ENCODE measurements at regions of chr11 and their contacts with region 1.

Region 1: DNA sequence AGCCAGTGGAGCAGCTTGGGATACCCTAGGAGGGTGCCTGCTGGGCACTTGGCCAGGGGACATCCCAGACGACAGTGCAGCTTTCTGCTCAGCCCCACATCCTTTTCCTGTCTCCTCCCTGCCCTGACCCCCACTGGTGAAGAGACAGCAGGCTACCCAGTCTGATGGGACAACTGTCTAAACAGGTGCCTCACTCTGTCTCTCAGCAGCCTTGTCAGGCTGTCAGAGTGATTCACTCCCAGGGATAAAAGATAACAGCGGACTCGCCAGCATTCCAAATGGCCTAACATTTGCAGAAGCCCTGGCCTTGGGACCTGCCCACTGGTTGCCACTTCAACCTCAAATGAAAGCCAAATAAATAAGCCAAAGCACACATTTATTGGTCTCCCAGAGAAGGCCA is 318.6 kb upstream of the PLET1 start:
- DNase-seq: no peak
- H3K4me3 ChIP-seq: no peak overlapping the region
- H3K27ac ChIP-seq: no peak overlapping the region
- H3K4me1 ChIP-seq: no peaks in the 10 kb centered on the region
- H3K27me3 ChIP-seq: no peaks in the 10 kb centered on the region
- CTCF ChIP-seq: no peak

Region 2: DNA sequence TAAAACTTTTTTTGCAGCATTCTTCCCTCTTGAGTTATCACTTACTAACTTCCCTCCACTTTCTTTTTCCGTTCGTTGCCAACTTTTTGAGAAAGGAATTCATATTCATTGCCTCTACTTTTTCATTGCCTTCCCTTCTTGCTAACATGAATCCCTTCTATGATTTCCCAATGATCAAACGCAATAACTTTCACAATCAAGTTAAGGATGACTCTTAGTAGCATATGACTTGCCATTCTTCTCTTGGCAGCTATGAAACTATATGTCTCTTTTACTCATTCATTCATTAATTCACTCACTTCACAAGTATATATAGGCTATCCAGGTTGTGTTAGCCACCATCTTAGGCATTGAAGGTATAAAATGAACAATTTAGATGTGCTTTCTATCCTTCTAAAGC is 1850.4 kb before region 1 on chr11:
- CTCF ChIA-PET with region 1: no interaction called
- POLR2A ChIA-PET with region 1: no interaction called
- intact Hi-C with region 1: no loop called
- DNase-seq: no peak
- H3K4me3 ChIP-seq: no peak overlapping the region
- H3K27ac ChIP-seq: no peak overlapping the region
- H3K4me1 ChIP-seq: no peaks in the 10 kb centered on the region
- H3K27me3 ChIP-seq: no peaks in the 10 kb centered on the region
- CTCF ChIP-seq: no peak

Region 3: GRCh38 chr11:112343368-112344039 is 235.8 kb before region 1 on chr11:
- CTCF ChIA-PET with region 1: no interaction called
- POLR2A ChIA-PET with region 1: no interaction called
- intact Hi-C with region 1: no loop called
- DNase-seq: no peak
- H3K4me3 ChIP-seq: no peak overlapping the region
- H3K27ac ChIP-seq: no peak overlapping the region
- H3K4me1 ChIP-seq: no peaks in the 10 kb centered on the region
- H3K27me3 ChIP-seq: peaks cover 10% of the 10 kb centered on the region
- CTCF ChIP-seq: no peak

Region 4: GRCh38 chr11:112844517-112844916 is 265.2 kb after region 1 on chr11:
- CTCF ChIA-PET with region 1: no interaction called
- POLR2A ChIA-PET with region 1: interaction called, 22 read pairs
- intact Hi-C with region 1: no loop called
- DNase-seq: no peak
- H3K4me3 ChIP-seq: no peak overlapping the region
- H3K27ac ChIP-seq: no peak overlapping the region
- H3K4me1 ChIP-seq: no peaks in the 10 kb centered on the region
- H3K27me3 ChIP-seq: no peaks in the 10 kb centered on the region
- CTCF ChIP-seq: no peak